Psoas muscle (tissue), 8 donors: ENCODE measurements at regions of chr7 and their contacts with region 1.

Region 1: DNA sequence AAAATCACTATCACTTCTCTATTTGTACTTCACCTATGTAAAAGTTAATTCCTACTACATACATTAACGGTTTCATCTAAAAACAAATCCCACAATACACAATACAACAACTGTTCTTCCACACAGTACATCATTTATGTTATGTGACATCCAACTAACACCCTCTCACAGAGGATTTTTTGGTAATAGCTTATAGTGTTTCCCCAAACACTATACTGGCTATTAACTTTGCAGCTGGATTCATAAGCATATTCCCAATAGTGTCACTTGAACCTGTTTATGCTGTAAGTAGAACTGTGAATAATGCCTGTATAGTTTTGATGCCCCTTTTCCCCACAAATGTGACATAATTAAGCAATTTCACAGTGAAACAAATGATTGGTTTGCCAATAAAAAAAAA is 49.9 kb downstream of the POT1 start:
- DNase-seq: no peak
- ATAC-seq: no peak
- H3K4me3 ChIP-seq: no peak overlapping the region
- H3K27ac ChIP-seq: no peak overlapping the region
- H3K4me1 ChIP-seq: no peaks in the 10 kb centered on the region
- H3K27me3 ChIP-seq: no peaks in the 10 kb centered on the region
- CTCF ChIP-seq: no peak

Region 2: DNA sequence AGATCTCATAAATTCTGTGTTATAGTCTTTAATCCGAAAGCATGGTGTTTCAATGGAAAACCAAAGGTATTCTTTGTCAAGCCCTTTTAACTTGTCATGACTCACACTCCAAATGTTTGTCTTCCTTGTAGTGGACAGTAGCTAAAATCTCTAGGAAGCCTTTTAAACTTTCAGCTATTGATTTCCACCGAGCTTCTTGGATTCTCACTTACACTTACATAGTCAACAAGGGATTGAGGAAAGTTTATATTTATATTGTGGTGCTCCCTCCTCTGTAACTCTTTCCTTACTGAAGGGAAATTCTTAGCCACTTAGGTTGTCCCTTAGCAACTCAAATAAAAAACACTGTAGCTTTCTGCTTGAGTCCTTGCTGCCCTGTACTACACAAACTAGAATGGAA is 83.0 kb before region 1 on chr7:
- intact Hi-C with region 1: no loop called
- DNase-seq: no peak
- ATAC-seq: no peak
- H3K4me3 ChIP-seq: no peak overlapping the region
- H3K27ac ChIP-seq: no peak overlapping the region
- H3K4me1 ChIP-seq: no peaks in the 10 kb centered on the region
- H3K27me3 ChIP-seq: no peaks in the 10 kb centered on the region
- CTCF ChIP-seq: no peak

Region 3: GRCh38 chr7:125065001-125065400 is 185.2 kb after region 1 on chr7:
- intact Hi-C with region 1: no loop called
- DNase-seq: no peak
- ATAC-seq: no peak
- H3K4me3 ChIP-seq: no peak overlapping the region
- H3K27ac ChIP-seq: no peak overlapping the region
- H3K4me1 ChIP-seq: peaks cover 8% of the 10 kb centered on the region
- H3K27me3 ChIP-seq: no peaks in the 10 kb centered on the region
- CTCF ChIP-seq: no peak

Region 4: DNA sequence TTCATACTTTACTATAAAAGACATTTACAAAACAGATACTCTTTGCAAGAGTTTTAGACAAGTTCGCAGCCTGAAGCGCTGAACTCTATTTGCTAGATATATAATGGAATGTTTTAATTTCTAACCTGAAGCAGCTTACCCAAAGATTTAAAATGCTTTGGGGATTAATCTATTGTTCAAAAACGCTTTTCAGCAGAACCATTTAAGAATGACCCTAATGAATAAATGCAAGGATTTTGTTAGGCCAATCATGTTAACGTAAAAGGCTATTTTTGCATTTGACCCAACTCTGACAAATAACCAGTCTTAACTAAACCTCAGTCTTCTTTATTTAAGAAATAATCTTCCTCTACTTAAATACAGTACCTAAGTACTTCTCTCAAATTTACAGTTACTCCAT is 456.6 kb after region 1 on chr7:
- intact Hi-C with region 1: no loop called
- DNase-seq: no peak
- ATAC-seq: no peak
- H3K4me3 ChIP-seq: no peak overlapping the region
- H3K27ac ChIP-seq: no peak overlapping the region
- H3K4me1 ChIP-seq: no peaks in the 10 kb centered on the region
- H3K27me3 ChIP-seq: no peaks in the 10 kb centered on the region
- CTCF ChIP-seq: no peak

Region 5: DNA sequence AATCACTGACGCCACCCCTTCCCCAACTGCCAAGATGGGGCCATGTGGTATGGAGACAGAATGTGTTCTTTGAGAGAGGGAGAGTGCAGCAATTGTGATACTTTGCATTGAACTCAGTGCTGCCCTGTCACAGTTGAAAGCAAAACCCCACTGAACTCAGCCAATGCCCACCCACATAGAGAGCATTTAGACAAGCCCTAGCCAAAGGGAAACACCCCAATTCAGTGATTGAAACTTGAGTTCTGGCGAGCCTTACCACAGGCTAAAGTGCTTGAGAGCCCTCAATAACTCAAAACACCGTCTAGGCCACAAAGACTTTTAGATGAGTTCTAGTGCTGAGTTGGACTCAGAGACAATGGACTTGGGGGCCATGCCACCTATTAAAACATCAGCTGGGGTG is 801.7 kb after region 1 on chr7:
- intact Hi-C with region 1: loop called in 1 of 2 experiments (anchors 5 kb)
- DNase-seq: no peak
- ATAC-seq: no peak
- H3K4me3 ChIP-seq: no peak overlapping the region
- H3K27ac ChIP-seq: no peak overlapping the region
- H3K4me1 ChIP-seq: no peaks in the 10 kb centered on the region
- H3K27me3 ChIP-seq: no peaks in the 10 kb centered on the region
- CTCF ChIP-seq: no peak